Caco-2 (cell line): ENCODE measurements at regions of chr11 and their contacts with region 1.

Region 1: GRCh38 chr11:72222907-72223614 is 1.5 kb upstream of the INPPL1 start:
- DNase-seq: peak; percentile 98 to 99
- H3K4me3 ChIP-seq: peak overlapping the region; percentile 79
- H3K4me3 Mint-ChIP-seq: peak overlapping the region; percentile 99
- H3K27ac Mint-ChIP-seq: peak overlapping the region; percentile 72
- H3K4me1 ChIP-seq: peaks cover 28% of the 10 kb centered on the region
- H3K4me1 Mint-ChIP-seq: peaks cover 19% of the 10 kb centered on the region
- H3K27me3 ChIP-seq: no peaks in the 10 kb centered on the region
- H3K27me3 Mint-ChIP-seq: no peaks in the 10 kb centered on the region
- CTCF ChIP-seq: peak in 1 of 2 experiments; percentile 51

Region 2: DNA sequence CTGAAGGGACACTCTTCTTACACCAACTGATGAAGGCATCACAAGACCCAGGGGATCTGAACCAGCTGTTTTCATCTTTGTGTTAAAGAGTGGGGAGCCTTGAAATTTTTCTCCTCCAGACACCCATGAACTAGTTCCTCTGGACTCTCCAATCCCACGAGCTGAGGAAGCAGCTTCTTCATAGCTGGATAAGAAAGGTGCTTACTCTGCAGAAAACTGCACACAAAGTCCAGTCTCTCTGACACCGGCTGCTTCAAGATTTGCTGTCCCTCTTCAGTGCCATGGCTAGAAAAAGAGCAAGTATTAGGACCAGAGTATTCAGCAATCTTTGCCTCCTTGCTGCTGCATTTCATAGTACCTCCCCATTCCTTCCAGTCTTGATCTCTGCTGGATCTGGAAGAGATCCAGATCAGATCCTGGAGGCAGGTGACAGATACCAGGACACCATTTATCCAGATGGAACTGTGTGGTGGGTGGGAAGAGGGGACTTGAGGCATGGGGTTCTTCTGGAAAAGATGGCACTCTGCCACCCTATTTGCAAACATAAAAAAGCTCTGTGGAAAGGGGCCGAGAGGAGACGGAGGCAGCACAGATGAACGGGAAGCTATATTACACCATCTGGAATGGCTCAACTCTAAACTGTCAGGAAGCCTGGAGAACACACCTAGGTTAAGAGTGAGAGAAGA is 198.8 kb before region 1 on chr11:
- CTCF ChIA-PET with region 1: interaction called, 18 read pairs
- POLR2A ChIA-PET with region 1: no interaction called
- intact Hi-C with region 1: no loop called
- DNase-seq: no peak
- H3K4me3 ChIP-seq: no peak overlapping the region
- H3K4me3 Mint-ChIP-seq: no peak overlapping the region
- H3K27ac Mint-ChIP-seq: no peak overlapping the region
- H3K4me1 ChIP-seq: 0 out of 2 replicates have a peak, but pooled peaks cover 4% of the 10 kb centered on the region
- H3K4me1 Mint-ChIP-seq: peaks cover 8% of the 10 kb centered on the region
- H3K27me3 ChIP-seq: no peaks in the 10 kb centered on the region
- H3K27me3 Mint-ChIP-seq: no peaks in the 10 kb centered on the region
- CTCF ChIP-seq: no peak

Region 3: DNA sequence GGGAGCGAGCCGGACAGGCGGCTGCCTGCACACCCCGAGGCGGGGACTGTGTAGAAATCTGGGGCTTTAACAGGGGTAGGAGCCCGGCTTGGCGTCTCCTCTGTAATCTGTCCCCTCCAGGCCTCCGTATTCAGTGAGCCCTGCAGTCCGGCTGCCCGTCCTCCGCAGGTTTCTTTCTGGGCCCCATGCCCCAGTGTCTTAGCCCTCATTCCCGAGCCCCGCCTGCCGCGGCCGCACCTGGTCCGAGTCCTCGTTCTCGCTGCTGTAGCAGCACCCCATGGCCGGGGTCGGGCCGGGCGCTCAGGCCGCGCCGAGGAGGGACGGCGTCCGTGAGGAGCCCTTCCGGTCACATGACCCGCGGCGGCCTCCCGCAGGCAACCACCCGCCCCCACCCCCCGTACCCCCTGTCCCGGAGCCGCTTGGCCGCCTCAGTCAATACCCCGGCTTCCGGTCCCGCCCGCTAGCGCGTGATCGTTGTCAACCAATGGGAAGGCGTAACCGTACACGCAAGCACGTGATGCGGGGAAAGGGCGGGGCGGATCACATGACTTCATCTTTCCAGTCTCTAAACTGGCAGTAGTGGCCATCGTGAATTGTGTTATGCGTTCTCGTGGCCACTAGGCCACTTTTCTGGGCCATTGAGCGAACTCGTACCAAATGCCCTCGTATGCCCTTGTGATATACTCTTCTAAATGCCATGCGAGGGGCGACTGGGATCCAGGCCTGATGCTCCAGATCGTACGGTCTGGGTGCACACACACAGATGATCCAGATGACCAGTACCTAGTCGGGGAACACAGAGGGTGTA is 119.9 kb before region 1 on chr11 and contains the start of gene LAMTOR1:
- CTCF ChIA-PET with region 1: no interaction called
- POLR2A ChIA-PET with region 1: interaction called, 3 read pairs
- intact Hi-C with region 1: loop called (anchors 2 kb)
- DNase-seq: peak; percentile 100
- H3K4me3 ChIP-seq: peak within 1 kb of the TSS; percentile 93
- H3K4me3 Mint-ChIP-seq: peak within 1 kb of the TSS; percentile 97
- H3K27ac Mint-ChIP-seq: peak within 1 kb of the TSS; percentile 98
- H3K4me1 ChIP-seq: peaks cover 18% of the 10 kb centered on the region
- H3K4me1 Mint-ChIP-seq: peaks cover 26% of the 10 kb centered on the region
- H3K27me3 ChIP-seq: no peaks in the 10 kb centered on the region
- H3K27me3 Mint-ChIP-seq: no peaks in the 10 kb centered on the region
- CTCF ChIP-seq: peak; percentile 72 to 79
- total RNA-seq, gene LAMTOR1: 158 and 170 TPM in 2 replicates

Region 4: GRCh38 chr11:72179804-72180396 is 43.2 kb before region 1 on chr11:
- CTCF ChIA-PET with region 1: interaction called, 3 read pairs
- POLR2A ChIA-PET with region 1: interaction called, 3 read pairs
- intact Hi-C with region 1: loop called (anchors 5 kb)
- DNase-seq: no peak
- H3K4me3 ChIP-seq: no peak overlapping the region
- H3K4me3 Mint-ChIP-seq: no peak overlapping the region
- H3K27ac Mint-ChIP-seq: peak overlapping the region; percentile 40
- H3K4me1 ChIP-seq: peaks cover 24% of the 10 kb centered on the region
- H3K4me1 Mint-ChIP-seq: peaks cover 27% of the 10 kb centered on the region
- H3K27me3 ChIP-seq: no peaks in the 10 kb centered on the region
- H3K27me3 Mint-ChIP-seq: no peaks in the 10 kb centered on the region
- CTCF ChIP-seq: no peak

Region 5: GRCh38 chr11:72238040-72238450 is 15.0 kb after region 1 on chr11:
- CTCF ChIA-PET with region 1: interaction called, 6 read pairs
- POLR2A ChIA-PET with region 1: interaction called, 7 read pairs
- intact Hi-C with region 1: loop called (anchors 1 kb)
- DNase-seq: peak; percentile 68 to 72
- H3K4me3 ChIP-seq: no peak overlapping the region
- H3K4me3 Mint-ChIP-seq: no peak overlapping the region
- H3K27ac Mint-ChIP-seq: no peak overlapping the region
- H3K4me1 ChIP-seq: peaks cover 24% of the 10 kb centered on the region
- H3K4me1 Mint-ChIP-seq: peaks cover 14% of the 10 kb centered on the region
- H3K27me3 ChIP-seq: no peaks in the 10 kb centered on the region
- H3K27me3 Mint-ChIP-seq: no peaks in the 10 kb centered on the region
- CTCF ChIP-seq: peak; percentile 65 to 72

Region 6: GRCh38 chr11:72361321-72361720 is 138.3 kb after region 1 on chr11:
- CTCF ChIA-PET with region 1: no interaction called
- POLR2A ChIA-PET with region 1: no interaction called
- intact Hi-C with region 1: no loop called
- DNase-seq: no peak
- H3K4me3 ChIP-seq: no peak overlapping the region
- H3K4me3 Mint-ChIP-seq: no peak overlapping the region
- H3K27ac Mint-ChIP-seq: no peak overlapping the region
- H3K4me1 ChIP-seq: no peaks in the 10 kb centered on the region
- H3K4me1 Mint-ChIP-seq: peaks cover 6% of the 10 kb centered on the region
- H3K27me3 ChIP-seq: no peaks in the 10 kb centered on the region
- H3K27me3 Mint-ChIP-seq: no peaks in the 10 kb centered on the region
- CTCF ChIP-seq: no peak